ENCODE measurements at regions of chr4 and their contacts with region 1.

Region 1: DNA sequence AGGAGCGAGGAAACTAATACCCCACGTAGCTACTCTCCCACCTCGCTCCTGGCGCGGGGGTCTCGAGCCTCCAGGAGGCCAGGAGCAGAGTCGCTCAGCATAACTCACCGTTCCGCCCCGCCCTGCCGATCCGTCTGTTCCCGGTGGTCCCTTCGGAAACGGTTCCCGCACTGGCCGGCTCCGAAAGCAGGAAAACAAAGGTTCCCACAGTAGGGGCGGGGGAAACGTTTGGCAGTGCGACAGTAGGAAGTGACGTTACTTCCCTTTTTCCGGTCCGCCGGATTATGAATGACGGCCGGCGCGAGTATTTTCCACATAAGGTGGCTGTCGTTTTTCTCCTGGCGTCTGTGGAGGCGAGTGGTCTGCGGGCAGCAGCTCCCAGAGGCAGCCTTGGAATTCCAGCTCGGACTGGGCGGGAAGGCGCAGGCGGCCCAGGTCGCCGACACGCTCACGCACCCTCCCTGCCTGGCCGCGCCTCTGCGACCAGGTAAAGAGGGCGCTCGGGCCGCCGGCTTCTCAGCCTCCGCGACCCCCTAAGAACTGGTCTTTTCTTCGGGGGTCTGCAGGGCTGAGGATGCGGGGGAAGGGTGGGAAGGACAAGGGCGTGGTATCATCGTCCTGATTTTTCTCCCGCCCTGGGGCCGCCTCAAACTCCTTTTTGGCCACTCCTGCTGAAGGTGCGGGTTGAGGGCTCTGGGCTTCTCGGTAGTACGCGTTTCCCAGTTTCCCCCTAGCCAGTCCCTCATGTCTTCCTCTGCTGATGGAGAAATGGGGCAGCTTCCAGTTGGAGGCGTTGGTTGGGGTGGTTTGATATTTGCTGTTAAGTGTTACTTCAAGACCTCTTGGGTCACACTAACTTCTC is at the starts of genes GSTCD and INTS12:
- DNase-seq: peak; percentile 93
- ATAC-seq: peak; percentile 99
- H3K4me3 ChIP-seq: peak within 1 kb of the TSS; percentile 59
- H3K27ac ChIP-seq: peak within 1 kb of the TSS; percentile 75
- H3K4me1 ChIP-seq: no peaks in the 10 kb centered on the region
- H3K27me3 ChIP-seq: no peaks in the 10 kb centered on the region
- CTCF ChIP-seq: no peak
- POLR2A ChIP-seq: peak; percentile 89
- RAD21 ChIP-seq: no peak
- total RNA-seq, gene GSTCD: 16.7 and 20.3 TPM in 2 replicates
- total RNA-seq, gene INTS12: 30.8 and 36.0 TPM in 2 replicates

Region 2: DNA sequence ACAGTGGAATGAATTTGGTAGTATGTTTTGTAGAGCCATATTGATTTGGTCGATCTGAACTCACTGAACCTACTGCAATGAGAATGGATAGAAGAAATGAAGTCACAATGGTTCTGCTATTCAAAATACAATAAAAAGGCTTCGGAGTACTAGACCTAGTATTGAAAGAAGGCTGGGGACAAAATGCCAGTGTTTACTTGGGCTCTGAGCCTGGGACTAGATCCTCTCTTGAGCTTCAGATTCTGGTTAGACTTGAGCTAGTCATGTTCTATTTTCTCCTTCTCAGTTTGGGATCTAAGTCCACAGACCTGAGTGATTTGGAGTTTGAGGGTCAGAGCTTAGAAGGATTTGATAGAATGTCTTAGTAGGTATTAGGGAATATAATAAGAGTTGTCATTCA is 10.2 kb before region 1 on chr4:
- CTCF ChIA-PET with region 1: no interaction called
- POLR2A ChIA-PET with region 1: no interaction called
- dilution Hi-C with region 1: no loop called
- in situ Hi-C with region 1: no loop called
- intact Hi-C with region 1: no loop called
- DNase-seq: no peak
- ATAC-seq: no peak
- H3K4me3 ChIP-seq: no peak overlapping the region
- H3K27ac ChIP-seq: no peak overlapping the region
- H3K4me1 ChIP-seq: no peaks in the 10 kb centered on the region
- H3K27me3 ChIP-seq: no peaks in the 10 kb centered on the region
- CTCF ChIP-seq: no peak
- POLR2A ChIP-seq: no peak
- RAD21 ChIP-seq: no peak

Region 3: DNA sequence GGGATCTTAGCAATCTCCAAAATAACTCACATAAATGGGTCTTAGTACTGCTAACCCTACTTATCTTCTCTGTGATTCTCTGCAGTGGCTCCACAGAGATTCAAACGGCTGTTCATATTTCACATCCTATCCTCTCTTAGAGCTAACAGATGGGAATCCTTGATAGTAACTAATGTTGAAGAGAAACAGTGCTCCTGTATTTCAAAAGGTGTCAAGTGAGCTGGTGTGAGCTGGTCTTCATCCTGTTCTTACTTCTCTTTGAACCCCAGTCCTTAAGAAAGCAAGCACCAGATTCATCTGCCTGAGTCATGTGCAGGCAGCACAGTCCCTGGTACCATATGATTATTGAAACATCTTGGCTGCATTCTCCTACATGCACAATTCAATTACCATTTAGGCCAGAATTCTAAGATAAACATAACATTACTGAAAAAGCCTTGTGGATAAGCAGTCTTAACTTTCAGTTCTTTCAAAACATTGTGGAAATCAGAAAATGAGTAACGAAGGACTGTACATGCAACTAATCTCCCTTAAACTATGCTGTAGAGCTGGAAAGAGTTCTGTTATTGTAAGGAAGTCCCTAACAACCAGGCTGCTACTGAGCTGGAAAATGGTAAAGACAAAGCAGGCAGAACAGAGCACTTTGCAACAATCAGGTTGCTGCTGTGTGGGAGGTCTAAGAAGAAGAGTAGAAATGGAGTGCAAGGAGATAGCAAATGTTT is 339.6 kb after region 1 on chr4:
- CTCF ChIA-PET with region 1: no interaction called
- POLR2A ChIA-PET with region 1: no interaction called
- dilution Hi-C with region 1: no loop called
- in situ Hi-C with region 1: no loop called
- intact Hi-C with region 1: loop called (anchors 10 kb)
- DNase-seq: peak; percentile 77
- ATAC-seq: peak; percentile 93
- H3K4me3 ChIP-seq: no peak overlapping the region
- H3K27ac ChIP-seq: no peak overlapping the region; the same call in 1 of the 2 replicates
- H3K4me1 ChIP-seq: peaks cover 2% of the 10 kb centered on the region
- H3K27me3 ChIP-seq: no peaks in the 10 kb centered on the region
- CTCF ChIP-seq: no peak
- POLR2A ChIP-seq: no peak
- RAD21 ChIP-seq: no peak

Region 4: DNA sequence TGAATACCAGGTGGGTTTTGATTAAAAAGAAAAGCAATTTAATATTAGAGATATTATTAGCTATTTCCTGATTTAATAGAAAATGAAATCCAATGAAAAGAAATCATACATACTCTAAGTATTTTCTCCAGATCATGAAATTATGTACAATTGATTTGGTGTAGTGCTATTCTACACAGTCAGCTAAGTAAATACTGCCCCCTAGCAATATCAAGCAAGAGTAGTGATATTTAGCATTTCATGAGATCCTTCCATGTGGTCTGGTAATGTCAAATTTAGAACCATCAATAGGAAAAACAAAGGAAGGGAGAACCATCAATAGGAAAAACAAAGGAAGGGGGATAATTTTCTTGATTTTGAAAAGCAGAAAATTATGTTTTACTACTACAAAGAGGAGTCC is 492.6 kb after region 1 on chr4:
- CTCF ChIA-PET with region 1: interaction called, 3 read pairs
- POLR2A ChIA-PET with region 1: interaction called, 5 read pairs
- dilution Hi-C with region 1: no loop called
- in situ Hi-C with region 1: no loop called
- intact Hi-C with region 1: loop called (anchors 5 kb)
- DNase-seq: peak; percentile 12
- ATAC-seq: peak; percentile 71
- H3K4me3 ChIP-seq: no peak overlapping the region
- H3K27ac ChIP-seq: no peak overlapping the region
- H3K4me1 ChIP-seq: no peaks in the 10 kb centered on the region
- H3K27me3 ChIP-seq: no peaks in the 10 kb centered on the region
- CTCF ChIP-seq: peak; percentile 46
- POLR2A ChIP-seq: no peak
- RAD21 ChIP-seq: peak; percentile 55